MCF 10A (cell line): ENCODE measurements at regions of chr9 and their contacts with region 1.

Region 1: DNA sequence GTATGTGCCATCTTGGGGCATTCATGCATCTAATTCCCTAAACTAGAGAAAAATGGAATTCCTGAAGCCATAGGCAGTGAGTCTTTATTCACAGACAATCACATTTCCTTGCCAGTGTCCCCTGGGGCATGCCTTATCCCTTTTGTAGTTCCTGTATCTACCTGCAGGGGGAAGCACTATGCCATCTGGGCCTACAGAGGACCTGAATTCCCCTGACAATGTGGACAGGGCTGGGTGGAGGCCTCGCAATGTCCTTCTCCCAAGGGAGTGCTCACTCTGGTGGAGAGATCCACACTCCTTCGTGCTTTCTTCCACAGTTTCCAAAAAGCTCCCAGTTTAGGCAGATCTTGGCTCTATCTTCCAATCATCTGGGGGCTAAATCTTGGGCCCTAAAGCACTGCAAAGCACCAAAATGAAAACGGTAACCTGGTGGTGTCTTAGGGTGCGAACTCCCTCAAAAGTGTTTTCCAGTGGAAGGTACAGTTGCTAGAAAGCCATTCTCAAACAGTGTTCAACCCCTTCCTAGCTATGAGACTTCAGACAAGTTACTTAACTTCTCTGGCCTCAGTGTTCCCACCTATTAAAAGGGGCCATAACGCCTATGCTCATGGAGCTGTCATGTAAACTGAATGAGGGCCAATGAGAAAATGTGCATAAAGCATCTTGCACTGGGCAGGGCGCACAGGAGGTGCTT is 17.5 kb downstream of the WHRN start:
- DNase-seq: peak; percentile 89
- H3K4me3 Mint-ChIP-seq: no peak overlapping the region
- H3K27ac Mint-ChIP-seq: no peak overlapping the region
- H3K4me1 Mint-ChIP-seq: peaks cover 22% of the 10 kb centered on the region
- H3K27me3 Mint-ChIP-seq: no peaks in the 10 kb centered on the region
- CTCF ChIP-seq: peak; percentile 83

Region 2: GRCh38 chr9:114339130-114339908 is 148.4 kb before region 1 on chr9:
- CTCF ChIA-PET with region 1: no interaction called
- POLR2A ChIA-PET with region 1: no interaction called
- intact Hi-C with region 1: loop called (anchors 1 kb)
- DNase-seq: peak; percentile 60
- H3K4me3 Mint-ChIP-seq: no peak overlapping the region
- H3K27ac Mint-ChIP-seq: no peak overlapping the region
- H3K4me1 Mint-ChIP-seq: no peaks in the 10 kb centered on the region
- H3K27me3 Mint-ChIP-seq: no peaks in the 10 kb centered on the region
- CTCF ChIP-seq: peak; percentile 89

Region 3: GRCh38 chr9:114475412-114476135 is 12.2 kb before region 1 on chr9:
- CTCF ChIA-PET with region 1: interaction called, 12 read pairs
- POLR2A ChIA-PET with region 1: interaction called, 3 read pairs
- intact Hi-C with region 1: no loop called
- DNase-seq: no peak
- H3K4me3 Mint-ChIP-seq: no peak overlapping the region
- H3K27ac Mint-ChIP-seq: no peak overlapping the region
- H3K4me1 Mint-ChIP-seq: peaks cover 11% of the 10 kb centered on the region
- H3K27me3 Mint-ChIP-seq: no peaks in the 10 kb centered on the region
- CTCF ChIP-seq: no peak

Region 4: DNA sequence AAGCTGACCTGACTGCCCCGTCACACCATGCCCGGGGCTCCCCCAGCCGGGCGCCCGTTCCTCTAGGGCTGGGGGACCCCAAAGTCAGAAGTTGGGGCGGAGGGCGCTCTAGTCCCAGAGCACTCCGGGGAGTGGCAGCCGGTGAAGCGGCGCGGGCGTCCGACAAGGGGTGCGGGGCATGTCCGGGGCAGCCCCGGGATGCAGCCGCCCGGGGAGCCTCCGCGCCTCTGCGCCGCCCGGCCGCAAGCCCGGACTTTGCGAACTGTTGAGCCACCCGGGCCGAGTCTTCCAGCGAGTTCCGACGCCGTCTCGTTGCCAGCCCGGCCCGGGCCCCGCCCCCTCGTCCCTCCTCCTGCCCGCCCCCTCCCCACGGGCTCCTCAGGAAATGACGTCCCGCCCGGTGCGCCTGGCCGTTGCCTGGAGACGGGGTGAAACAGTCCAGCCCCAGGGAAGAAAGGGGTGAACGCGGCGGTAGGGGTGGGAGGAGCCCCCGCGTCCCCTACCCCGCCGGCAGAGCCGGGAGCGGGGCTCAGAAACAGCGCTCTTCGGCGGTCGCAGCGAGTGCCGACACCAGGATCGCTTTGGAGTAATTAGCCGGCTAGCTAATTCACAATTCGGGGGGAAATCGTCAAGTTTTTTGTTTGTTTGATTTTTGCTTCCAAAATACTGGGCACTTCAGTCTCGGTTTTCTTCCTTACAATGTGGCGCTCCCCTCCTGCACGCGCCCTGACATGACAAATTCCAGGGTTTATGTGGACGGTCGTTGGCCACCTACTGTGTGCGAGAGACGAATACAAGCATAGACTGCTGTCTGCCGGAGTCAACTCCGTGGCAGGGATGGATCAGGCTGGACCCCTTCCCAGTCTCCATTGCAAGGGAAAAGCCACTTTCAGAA is 17.7 kb after region 1 on chr9 and contains the start of gene WHRN:
- CTCF ChIA-PET with region 1: interaction called, 24 read pairs
- POLR2A ChIA-PET with region 1: interaction called, 37 read pairs
- intact Hi-C with region 1: loop called (anchors 1 kb)
- DNase-seq: peak; percentile 86
- H3K4me3 Mint-ChIP-seq: peak within 1 kb of the TSS; percentile 85
- H3K27ac Mint-ChIP-seq: peak within 1 kb of the TSS; percentile 94
- H3K4me1 Mint-ChIP-seq: peaks cover 27% of the 10 kb centered on the region
- H3K27me3 Mint-ChIP-seq: peaks cover 29% of the 10 kb centered on the region
- CTCF ChIP-seq: no peak
- total RNA-seq, gene WHRN: 9.4 and 12.8 TPM in 2 replicates

Region 5: GRCh38 chr9:114532561-114533237 is 44.9 kb after region 1 on chr9:
- CTCF ChIA-PET with region 1: no interaction called
- POLR2A ChIA-PET with region 1: no interaction called
- intact Hi-C with region 1: no loop called
- DNase-seq: no peak
- H3K4me3 Mint-ChIP-seq: no peak overlapping the region
- H3K27ac Mint-ChIP-seq: no peak overlapping the region
- H3K4me1 Mint-ChIP-seq: no peaks in the 10 kb centered on the region
- H3K27me3 Mint-ChIP-seq: no peaks in the 10 kb centered on the region
- CTCF ChIP-seq: no peak

Region 6: GRCh38 chr9:114559830-114560513 is 72.2 kb after region 1 on chr9:
- CTCF ChIA-PET with region 1: no interaction called
- POLR2A ChIA-PET with region 1: no interaction called
- intact Hi-C with region 1: no loop called
- DNase-seq: no peak
- H3K4me3 Mint-ChIP-seq: no peak overlapping the region
- H3K27ac Mint-ChIP-seq: no peak overlapping the region
- H3K4me1 Mint-ChIP-seq: no peaks in the 10 kb centered on the region
- H3K27me3 Mint-ChIP-seq: peaks cover 24% of the 10 kb centered on the region
- CTCF ChIP-seq: no peak

Region 7: DNA sequence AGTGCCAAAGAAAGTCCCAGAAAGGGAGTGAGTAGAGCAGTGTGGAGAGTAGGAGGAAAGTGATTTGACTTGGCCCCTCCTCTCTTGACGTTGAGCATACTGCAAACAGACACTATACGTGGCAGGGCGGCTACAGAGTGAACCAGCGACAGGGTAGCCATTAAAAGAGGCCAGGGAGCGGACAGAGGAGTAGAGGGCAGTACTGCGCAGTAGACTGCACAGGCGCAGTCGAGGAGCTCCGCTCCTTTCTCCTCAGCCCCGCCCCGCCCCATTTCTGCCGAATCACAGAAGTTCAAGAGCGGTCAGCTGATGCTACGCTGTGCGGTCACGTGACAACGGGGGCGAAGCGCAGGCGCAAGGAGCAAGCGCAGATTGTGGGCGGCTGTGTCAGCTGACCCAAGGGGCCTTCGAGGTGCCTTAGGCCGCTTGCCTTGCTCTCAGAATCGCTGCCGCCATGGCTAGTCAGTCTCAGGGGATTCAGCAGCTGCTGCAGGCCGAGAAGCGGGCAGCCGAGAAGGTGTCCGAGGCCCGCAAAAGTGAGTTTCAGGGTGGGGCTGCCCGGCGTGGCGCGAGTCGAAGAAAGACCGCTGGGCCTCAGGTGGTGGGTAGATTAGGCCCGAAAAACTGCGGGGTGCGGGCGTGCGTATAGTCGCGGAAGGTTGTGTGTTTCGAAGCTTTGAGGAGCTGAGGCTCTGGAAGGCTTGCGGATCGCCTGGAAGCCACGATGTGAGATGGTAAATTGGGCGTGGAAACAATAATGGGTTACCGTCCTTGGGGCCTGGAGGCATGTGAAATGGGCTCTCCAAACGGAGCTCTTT is 99.8 kb after region 1 on chr9 and contains the start of gene ATP6V1G1:
- CTCF ChIA-PET with region 1: interaction called, 6 read pairs
- POLR2A ChIA-PET with region 1: interaction called, 7 read pairs
- intact Hi-C with region 1: loop called (anchors 1 kb)
- DNase-seq: peak; percentile 99
- H3K4me3 Mint-ChIP-seq: peak within 1 kb of the TSS; percentile 100
- H3K27ac Mint-ChIP-seq: peak within 1 kb of the TSS; percentile 100
- H3K4me1 Mint-ChIP-seq: peaks cover 35% of the 10 kb centered on the region
- H3K27me3 Mint-ChIP-seq: no peaks in the 10 kb centered on the region
- CTCF ChIP-seq: no peak
- total RNA-seq, gene ATP6V1G1: 87.1 and 118 TPM in 2 replicates

Region 8: GRCh38 chr9:115013998-115014397 is 526.2 kb after region 1 on chr9:
- CTCF ChIA-PET with region 1: interaction called, 3 read pairs
- POLR2A ChIA-PET with region 1: no interaction called
- intact Hi-C with region 1: loop called (anchors 10 kb)
- DNase-seq: peak; percentile 84
- H3K4me3 Mint-ChIP-seq: no peak overlapping the region
- H3K27ac Mint-ChIP-seq: no peak overlapping the region
- H3K4me1 Mint-ChIP-seq: peaks cover 17% of the 10 kb centered on the region
- H3K27me3 Mint-ChIP-seq: peaks cover 14% of the 10 kb centered on the region
- CTCF ChIP-seq: peak; percentile 75